Heart right ventricle (tissue), 16 donors: ENCODE measurements at regions of chr17 and their contacts with region 1.

Region 1: DNA sequence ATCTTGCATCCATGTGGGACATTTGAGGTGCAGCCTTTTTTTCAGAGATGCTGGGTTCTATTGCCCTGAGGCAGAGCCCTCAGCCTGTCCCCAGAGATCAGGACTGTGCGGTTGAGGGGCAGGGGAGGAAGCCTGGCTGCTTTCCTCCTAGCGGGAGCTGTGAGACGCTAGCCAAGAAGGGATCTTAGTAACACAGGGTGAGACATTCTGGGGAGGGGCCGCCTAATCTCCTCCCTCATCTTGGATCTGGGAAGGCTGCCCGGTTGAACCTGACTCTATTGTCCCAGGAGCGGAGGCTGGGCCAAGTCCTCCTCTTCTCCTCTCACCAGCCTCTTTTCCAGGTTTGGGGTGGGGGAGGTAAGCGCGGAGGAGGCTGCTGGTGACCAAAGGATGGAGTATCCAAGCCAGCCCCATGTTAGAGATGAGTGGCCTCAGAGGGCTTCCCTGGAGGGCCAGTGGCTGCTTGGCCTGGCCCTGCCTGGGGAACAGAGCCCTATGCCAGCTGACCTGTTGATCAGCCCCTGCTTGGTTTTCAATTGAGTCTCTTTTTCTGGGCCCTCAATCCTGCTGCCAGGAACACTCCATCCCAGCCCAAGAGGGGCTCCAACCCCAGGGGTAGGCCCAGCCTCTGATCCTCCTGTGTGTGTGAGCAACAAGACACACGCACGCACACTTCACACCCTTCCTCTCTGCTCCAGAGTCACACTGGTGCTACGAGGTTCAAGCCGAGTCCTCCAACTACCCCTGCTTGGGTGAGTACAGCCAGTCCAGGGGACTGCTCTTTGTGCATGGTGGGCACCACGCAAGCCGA is 5.0 kb downstream of the CA4 start:
- DNase-seq: peak; percentile 42 to 62
- ATAC-seq: peak in 7 of 8 donors; percentile 47 to 83 (median 74)
- H3K4me3 ChIP-seq: peak overlapping the region in 2 of 10 donors; percentile 7
- H3K27ac ChIP-seq: peak overlapping the region; percentile 0 to 65 (median 32)
- H3K4me1 ChIP-seq: peaks cover 8 to 73% (median 45%) of the 10 kb centered on the region in 9 donors
- H3K27me3 ChIP-seq: peaks cover 4 to 81% (median 40%) of the 10 kb centered on the region in 7 donors
- CTCF ChIP-seq: no peak

Region 2: GRCh38 chr17:60169921-60170742 is 15.3 kb after region 1 on chr17:
- intact Hi-C with region 1: loop called in 1 of 10 experiments (anchors 2 kb)
- DNase-seq: peak; percentile 73 to 74
- ATAC-seq: peak; percentile 58 to 88 (median 78)
- H3K4me3 ChIP-seq: no peak overlapping the region
- H3K27ac ChIP-seq: peak overlapping the region in 9 of 10 donors; percentile 28 to 84 (median 63)
- H3K4me1 ChIP-seq: peaks cover 0 to 72% (median 41%) of the 10 kb centered on the region in 9 donors
- H3K27me3 ChIP-seq: peaks cover 0 to 6% (median 0%) of the 10 kb centered on the region in 7 donors
- CTCF ChIP-seq: no peak

Region 3: DNA sequence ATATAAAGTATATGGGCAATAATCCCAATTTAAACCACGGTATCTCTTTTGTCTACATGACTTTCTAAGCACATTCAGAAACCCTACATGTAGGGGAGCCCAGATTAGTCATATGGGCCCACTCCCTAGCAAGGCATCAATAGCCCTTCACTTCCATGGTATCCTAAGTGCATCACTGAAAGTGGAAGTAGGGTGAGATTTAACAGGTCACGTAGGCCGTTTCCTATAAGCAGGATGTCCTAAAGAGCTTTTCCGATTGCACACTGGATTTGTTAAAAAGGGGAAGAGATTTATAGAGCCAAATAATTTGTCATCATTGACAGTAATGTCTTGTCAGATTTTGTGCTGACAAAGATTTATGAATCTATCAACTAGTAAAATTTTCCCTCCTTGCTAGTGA is 33.9 kb after region 1 on chr17:
- intact Hi-C with region 1: no loop called
- DNase-seq: no peak
- ATAC-seq: peak in 1 of 8 donors; percentile 44
- H3K4me3 ChIP-seq: no peak overlapping the region
- H3K27ac ChIP-seq: peak overlapping the region in 1 of 10 donors; percentile 7
- H3K4me1 ChIP-seq: peaks cover 0 to 26% (median 0%) of the 10 kb centered on the region in 9 donors
- H3K27me3 ChIP-seq: no peaks in the 10 kb centered on the region
- CTCF ChIP-seq: no peak

Region 4: DNA sequence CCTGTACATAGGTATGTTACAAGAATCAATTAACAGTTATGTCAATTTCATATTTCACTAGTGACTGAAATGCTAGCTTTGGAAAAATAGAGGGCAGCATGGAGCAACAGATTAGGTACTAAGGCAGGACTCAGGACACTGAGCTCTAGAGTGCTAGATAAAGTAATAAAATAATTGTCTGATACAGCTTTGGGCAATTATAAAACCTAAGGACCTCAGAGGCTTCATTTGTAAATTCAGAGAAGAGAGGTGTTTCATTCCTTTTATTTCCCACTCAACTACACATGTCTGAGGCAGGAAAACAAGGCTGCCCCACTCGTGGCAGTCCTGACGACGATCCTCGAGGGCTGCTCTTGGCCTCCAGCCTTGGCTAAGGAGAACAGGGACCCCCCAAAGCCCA is 76.4 kb after region 1 on chr17:
- intact Hi-C with region 1: no loop called
- DNase-seq: no peak
- ATAC-seq: peak in 1 of 8 donors; percentile 58
- H3K4me3 ChIP-seq: no peak overlapping the region
- H3K27ac ChIP-seq: no peak overlapping the region
- H3K4me1 ChIP-seq: no peaks in the 10 kb centered on the region
- H3K27me3 ChIP-seq: no peaks in the 10 kb centered on the region
- CTCF ChIP-seq: peak in 8 of 9 donors; percentile 6 to 51 (median 44)

Region 5: GRCh38 chr17:60426606-60427005 is 271.8 kb after region 1 on chr17:
- intact Hi-C with region 1: loop called in 1 of 10 experiments (anchors 5 kb)
- DNase-seq: no peak
- ATAC-seq: no peak
- H3K4me3 ChIP-seq: no peak overlapping the region
- H3K27ac ChIP-seq: no peak overlapping the region
- H3K4me1 ChIP-seq: peaks cover 0 to 9% (median 1%) of the 10 kb centered on the region in 9 donors
- H3K27me3 ChIP-seq: no peaks in the 10 kb centered on the region
- CTCF ChIP-seq: no peak